Ascending aorta (tissue), 2 donors: ENCODE measurements at regions of chr20 and their contacts with region 1.

Region 1: GRCh38 chr20:24917797-24918578 is 31.1 kb upstream of the CST7 start:
- DNase-seq: peak in 1 of 2 donors; percentile 76
- H3K4me3 ChIP-seq: peak overlapping the region; percentile 30 to 40
- H3K27ac ChIP-seq: no peak overlapping the region
- H3K4me1 ChIP-seq: peaks cover 0 to 2% of the 10 kb centered on the region in 2 donors
- H3K27me3 ChIP-seq: no peaks in the 10 kb centered on the region
- CTCF ChIP-seq: peak; percentile 53 to 81 (median 74)

Region 2: GRCh38 chr20:23937303-23938117 is 980.5 kb before region 1 on chr20:
- intact Hi-C with region 1: loop called (anchors 2 kb)
- DNase-seq: peak in 1 of 2 donors; percentile 55
- H3K4me3 ChIP-seq: no peak overlapping the region
- H3K27ac ChIP-seq: no peak overlapping the region
- H3K4me1 ChIP-seq: no peaks in the 10 kb centered on the region
- H3K27me3 ChIP-seq: no peaks in the 10 kb centered on the region
- CTCF ChIP-seq: peak; percentile 26 to 49 (median 27)

Region 3: DNA sequence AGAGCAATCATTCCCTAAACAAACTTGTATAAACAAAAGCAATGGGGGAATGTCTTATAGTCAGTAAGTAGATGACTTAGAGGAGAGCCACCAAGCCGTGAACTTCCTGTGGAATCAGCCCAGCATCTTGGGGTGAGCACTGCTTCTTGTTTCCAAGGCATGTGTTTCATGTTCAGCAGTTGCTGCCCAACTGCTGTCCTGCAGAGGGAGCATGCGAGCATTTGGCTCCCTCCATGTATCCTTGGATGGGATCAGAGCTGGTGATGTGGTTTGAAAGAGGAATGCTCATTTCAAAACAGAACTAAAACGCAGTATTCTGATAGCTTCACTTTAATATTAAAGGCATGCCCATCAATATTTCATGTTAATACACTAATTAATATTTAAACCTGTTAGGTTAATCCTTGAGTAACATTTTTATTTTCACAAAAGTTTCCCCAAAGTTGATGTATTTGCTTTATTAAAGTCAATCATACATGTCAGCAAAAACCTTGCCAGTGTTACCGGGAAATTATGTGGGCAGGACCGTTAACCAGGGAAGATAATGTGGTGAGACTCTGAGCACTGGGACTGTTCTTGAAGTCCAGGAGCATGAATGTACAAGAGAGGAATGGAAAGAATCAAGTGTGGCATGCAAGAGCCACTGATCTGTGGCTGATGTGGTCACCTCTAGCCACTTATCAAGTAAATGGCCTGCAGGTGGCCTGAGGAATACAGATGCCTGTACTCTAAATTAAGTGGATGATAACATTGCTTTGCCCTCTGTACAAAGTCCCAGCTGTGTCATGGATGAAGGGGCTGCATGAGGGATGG is 757.2 kb before region 1 on chr20:
- intact Hi-C with region 1: loop called (anchors 1 kb)
- DNase-seq: no peak
- H3K4me3 ChIP-seq: no peak overlapping the region
- H3K27ac ChIP-seq: no peak overlapping the region
- H3K4me1 ChIP-seq: no peaks in the 10 kb centered on the region
- H3K27me3 ChIP-seq: no peaks in the 10 kb centered on the region
- CTCF ChIP-seq: peak; percentile 52 to 77 (median 56)

Region 4: GRCh38 chr20:25233016-25233820 is 315.2 kb after region 1 on chr20:
- intact Hi-C with region 1: no loop called
- DNase-seq: peak in 1 of 2 donors; percentile 91
- H3K4me3 ChIP-seq: no peak overlapping the region
- H3K27ac ChIP-seq: peak overlapping the region; percentile 93 to 97
- H3K4me1 ChIP-seq: peaks cover 11 to 50% of the 10 kb centered on the region in 2 donors
- H3K27me3 ChIP-seq: no peaks in the 10 kb centered on the region
- CTCF ChIP-seq: no peak